Activated naive CD4-positive, alpha-beta T cell treated with anti-CD3 and anti-CD28 coated beads, Interleukin-2, amount 10 ng/mL, durations not matched to agents 7 days and 5 days (primary cell): ENCODE measurements at regions of chr11 and their contacts with region 1.

Region 1: DNA sequence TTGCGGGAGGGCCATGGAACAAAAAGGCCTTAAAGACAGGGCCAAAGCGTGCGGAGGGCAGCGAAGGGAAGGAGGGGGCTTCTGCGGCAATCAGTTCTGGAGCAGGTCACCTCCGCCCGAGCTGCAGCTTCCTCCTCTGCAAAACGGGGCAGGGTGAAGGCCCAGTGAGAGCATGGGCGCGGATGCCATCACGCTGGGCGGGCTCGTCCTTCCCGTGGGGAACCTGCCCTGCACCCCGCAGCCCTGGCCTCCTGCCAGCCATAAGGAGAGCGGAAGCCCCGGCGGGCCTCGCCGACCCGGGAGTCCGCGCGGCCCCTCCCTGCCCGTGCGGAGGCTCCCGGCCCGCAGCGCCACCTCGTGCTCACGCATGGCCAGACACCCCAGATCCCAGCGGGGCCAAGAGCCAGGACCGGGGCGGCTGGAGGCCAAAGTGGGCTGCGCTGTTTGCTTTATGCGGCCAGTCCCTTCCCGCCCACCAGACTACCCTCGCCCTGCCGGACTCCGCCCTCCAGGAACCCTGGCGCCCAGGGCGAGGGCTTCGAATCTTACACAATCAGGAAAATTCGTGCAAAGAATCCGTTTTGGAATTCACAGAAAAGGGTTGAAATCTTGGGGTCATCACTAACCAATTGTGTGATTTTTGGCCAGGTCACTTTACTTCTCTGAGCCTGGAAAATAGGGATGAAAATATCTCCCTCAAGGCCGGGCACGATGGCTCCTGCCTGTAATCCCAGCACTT is 16.1 kb downstream of the TSKU start:
- DNase-seq: peak; percentile 83
- H3K4me3 Mint-ChIP-seq: peak overlapping the region; percentile 18
- H3K27ac Mint-ChIP-seq: no peak overlapping the region
- H3K4me1 Mint-ChIP-seq: peaks cover 25% of the 10 kb centered on the region
- H3K27me3 Mint-ChIP-seq: peaks cover 49% of the 10 kb centered on the region

Region 2: DNA sequence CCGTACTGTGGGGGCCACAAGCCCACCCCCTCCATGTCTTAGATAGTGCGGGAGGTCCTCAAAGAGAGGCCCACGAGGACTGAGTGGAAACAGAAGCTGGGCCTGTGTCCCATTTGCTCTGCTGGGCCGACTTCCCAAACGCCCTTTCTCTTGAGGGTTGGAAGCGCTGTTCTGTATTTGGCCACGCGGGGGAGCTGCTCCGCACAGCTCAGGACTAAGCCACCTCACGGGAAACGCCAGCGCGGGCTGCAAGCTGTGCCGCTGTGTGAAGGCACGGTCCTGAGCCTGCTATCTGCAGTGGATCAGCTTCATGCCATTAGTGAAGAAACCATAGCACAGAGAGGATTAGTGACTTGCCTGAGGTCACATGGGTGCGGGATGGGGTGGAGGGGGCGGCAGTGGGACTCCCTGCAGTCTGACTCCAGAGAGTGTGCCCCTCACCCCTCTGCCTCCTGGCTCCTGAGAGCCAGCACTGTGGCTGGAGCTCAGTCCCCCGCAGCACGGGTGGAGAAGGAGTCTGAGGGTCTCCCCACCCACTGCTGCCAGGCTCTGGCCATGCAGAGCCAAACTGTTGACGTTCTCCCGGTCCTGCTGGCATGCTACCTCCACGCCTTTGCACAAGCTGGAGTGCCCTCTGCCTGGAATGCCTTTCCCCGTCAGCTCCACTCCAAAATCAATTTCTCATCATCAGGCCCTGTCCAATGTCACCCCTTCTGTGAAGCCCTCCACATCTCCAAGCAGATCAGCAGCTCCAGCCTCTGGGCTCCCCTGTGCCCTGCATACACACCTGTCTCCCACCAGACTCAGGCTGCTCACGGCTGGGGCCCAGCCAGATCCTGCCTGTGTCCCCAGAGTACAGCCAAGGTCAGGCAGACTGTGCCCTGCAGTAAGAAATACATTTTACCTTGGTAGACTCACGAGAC is 77.2 kb before region 1 on chr11:
- CTCF ChIA-PET with region 1: interaction called, 19 read pairs
- DNase-seq: peak; percentile 83
- H3K4me3 Mint-ChIP-seq: no peak overlapping the region
- H3K27ac Mint-ChIP-seq: no peak overlapping the region
- H3K4me1 Mint-ChIP-seq: peaks cover 3% of the 10 kb centered on the region
- H3K27me3 Mint-ChIP-seq: peaks cover 42% of the 10 kb centered on the region